H1 (cell line): ENCODE measurements at regions of chr11 and their contacts with region 1.

Region 1: DNA sequence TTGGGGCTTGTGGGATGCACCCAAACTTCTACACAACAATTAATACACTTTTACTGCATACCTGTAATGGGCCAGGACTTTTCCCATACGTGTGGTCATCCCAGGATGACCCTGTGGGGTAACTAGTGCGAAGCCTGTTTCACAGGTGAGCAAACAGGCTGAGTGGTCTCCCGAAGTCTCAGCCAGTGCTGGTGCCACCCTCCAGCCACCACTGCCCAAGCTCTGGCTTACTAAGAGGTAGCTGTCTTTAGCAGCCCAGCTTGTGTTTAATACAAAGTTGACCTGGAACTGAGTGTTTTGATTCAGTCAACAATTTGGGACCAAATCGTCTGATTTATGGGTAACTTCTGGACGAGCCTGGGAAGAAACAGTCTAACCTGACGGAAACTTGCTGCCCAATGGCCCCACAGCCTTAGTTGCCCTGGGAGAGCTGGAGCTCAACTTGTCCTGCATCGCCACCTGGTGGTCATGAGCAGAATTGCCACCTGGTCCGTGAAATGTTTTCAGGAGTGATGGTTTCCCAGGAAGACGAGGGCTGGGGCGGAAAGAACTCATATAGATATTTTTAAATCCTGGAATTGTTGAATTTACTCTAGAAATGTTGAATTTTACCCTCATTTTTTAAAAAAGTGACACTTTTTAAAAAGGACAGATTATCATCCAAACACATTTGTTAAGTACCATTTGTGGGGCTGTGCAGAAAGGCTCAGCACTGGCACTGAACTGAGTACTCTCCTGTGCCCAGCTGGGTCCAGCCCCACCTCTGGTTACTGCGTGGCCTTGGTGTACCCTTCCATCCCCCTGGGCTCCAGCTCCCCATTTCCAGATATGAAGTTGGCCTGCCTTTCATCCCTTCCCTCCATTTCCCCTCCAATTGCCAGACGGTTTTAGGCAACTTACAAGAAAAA is 95.5 kb upstream of the PARVA start:
- DNase-seq: peak; percentile 57 to 94
- H3K4me3 ChIP-seq: no peak overlapping the region
- H3K27ac ChIP-seq: no peak overlapping the region
- H3K4me1 ChIP-seq: peaks cover 0 to 6% (median 0%) of the 10 kb centered on the region in 4 experiments; a peak in 1 of 7 replicates
- H3K27me3 ChIP-seq: no peaks in the 10 kb centered on the region
- CTCF ChIP-seq: peak; percentile 94 to 95 (median 94)
- EP300 ChIP-seq: no peak
- POLR2A ChIP-seq: no peak
- RAD21 ChIP-seq: peak; percentile 100

Region 2: DNA sequence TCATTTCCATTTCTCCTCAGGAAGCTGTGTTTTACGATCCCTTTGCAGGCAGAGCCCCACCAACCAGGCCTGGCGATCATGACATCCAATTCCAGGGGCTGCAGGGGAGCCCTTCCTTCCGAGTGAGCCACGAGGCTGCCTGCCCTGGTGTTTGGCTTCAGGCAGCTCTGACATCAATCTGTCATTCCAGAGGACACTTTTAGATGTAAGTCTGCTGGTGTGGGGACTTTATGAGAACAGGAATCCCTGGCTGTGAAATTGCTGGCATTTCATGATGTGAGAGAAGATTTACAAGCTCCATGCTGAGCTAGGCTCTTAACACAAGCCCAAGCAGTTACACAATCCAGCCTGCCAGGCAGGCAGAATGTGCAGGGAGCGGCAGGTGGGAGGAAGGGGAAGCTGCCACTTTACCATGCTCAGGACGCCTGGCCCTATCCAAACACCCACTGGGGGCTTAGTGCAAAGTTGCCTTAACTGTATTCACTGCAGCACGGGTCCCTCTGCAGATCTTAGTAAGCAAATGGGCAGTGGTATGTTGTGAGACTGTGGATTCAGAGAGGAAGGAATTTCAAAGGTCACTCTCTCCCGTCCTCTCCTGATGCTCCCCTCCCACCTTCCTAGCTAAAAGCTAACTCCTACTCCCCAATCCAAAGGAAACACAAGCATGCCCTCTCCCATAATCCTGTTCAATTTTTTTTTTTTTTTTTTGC is 214.9 kb before region 1 on chr11:
- CTCF ChIA-PET with region 1: interaction called, 13 read pairs
- POLR2A ChIA-PET with region 1: no interaction called
- DNase-seq: no peak
- H3K4me3 ChIP-seq: no peak overlapping the region; a peak in 1 of 8 replicates
- H3K27ac ChIP-seq: no peak overlapping the region
- H3K4me1 ChIP-seq: peaks cover 2 to 9% (median 5%) of the 10 kb centered on the region in 4 experiments; a peak in 4 of 7 replicates
- H3K27me3 ChIP-seq: peaks cover 0 to 2% (median under 1%) of the 10 kb centered on the region in 4 experiments; a peak in 1 of 7 replicates
- CTCF ChIP-seq: no peak
- EP300 ChIP-seq: no peak
- POLR2A ChIP-seq: no peak
- RAD21 ChIP-seq: no peak

Region 3: GRCh38 chr11:12087075-12088004 is 194.5 kb before region 1 on chr11:
- CTCF ChIA-PET with region 1: interaction called, 23 read pairs
- POLR2A ChIA-PET with region 1: interaction called, 3 read pairs
- DNase-seq: no peak
- H3K4me3 ChIP-seq: no peak overlapping the region
- H3K27ac ChIP-seq: no peak overlapping the region
- H3K4me1 ChIP-seq: peaks cover under 1 to 6% (median 6%) of the 10 kb centered on the region in 4 experiments
- H3K27me3 ChIP-seq: no peaks in the 10 kb centered on the region
- CTCF ChIP-seq: peak in 1 of 3 experiments; percentile 7; a peak in 1 of 4 replicates
- EP300 ChIP-seq: no peak
- POLR2A ChIP-seq: no peak
- RAD21 ChIP-seq: no peak

Region 4: GRCh38 chr11:12248338-12248737 is 33.5 kb before region 1 on chr11:
- CTCF ChIA-PET with region 1: interaction called, 11 read pairs
- POLR2A ChIA-PET with region 1: no interaction called
- DNase-seq: no peak
- H3K4me3 ChIP-seq: no peak overlapping the region
- H3K27ac ChIP-seq: no peak overlapping the region
- H3K4me1 ChIP-seq: peaks cover 5 to 19% (median 13%) of the 10 kb centered on the region in 4 experiments; a peak in 5 of 7 replicates
- H3K27me3 ChIP-seq: 0 out of 7 replicates have a peak, but pooled peaks cover 0 to 2% (median 0%) of the 10 kb centered on the region in 4 experiments
- CTCF ChIP-seq: no peak
- EP300 ChIP-seq: no peak
- POLR2A ChIP-seq: no peak
- RAD21 ChIP-seq: no peak

Region 5: GRCh38 chr11:12269104-12269441 is 12.8 kb before region 1 on chr11:
- CTCF ChIA-PET with region 1: interaction called, 37 read pairs
- POLR2A ChIA-PET with region 1: no interaction called
- DNase-seq: no peak
- H3K4me3 ChIP-seq: no peak overlapping the region
- H3K27ac ChIP-seq: no peak overlapping the region
- H3K4me1 ChIP-seq: peaks cover 0 to 4% (median 0%) of the 10 kb centered on the region in 4 experiments; a peak in 2 of 7 replicates
- H3K27me3 ChIP-seq: no peaks in the 10 kb centered on the region
- CTCF ChIP-seq: no peak
- EP300 ChIP-seq: no peak
- POLR2A ChIP-seq: no peak
- RAD21 ChIP-seq: no peak